ENCODE measurements at regions of chr2 and their contacts with region 1.

Region 1: GRCh38 chr2:19347619-19348562 is 10.5 kb downstream of the OSR1 start:
- DNase-seq: peak; percentile 88 to 98 (median 94)

Region 2: DNA sequence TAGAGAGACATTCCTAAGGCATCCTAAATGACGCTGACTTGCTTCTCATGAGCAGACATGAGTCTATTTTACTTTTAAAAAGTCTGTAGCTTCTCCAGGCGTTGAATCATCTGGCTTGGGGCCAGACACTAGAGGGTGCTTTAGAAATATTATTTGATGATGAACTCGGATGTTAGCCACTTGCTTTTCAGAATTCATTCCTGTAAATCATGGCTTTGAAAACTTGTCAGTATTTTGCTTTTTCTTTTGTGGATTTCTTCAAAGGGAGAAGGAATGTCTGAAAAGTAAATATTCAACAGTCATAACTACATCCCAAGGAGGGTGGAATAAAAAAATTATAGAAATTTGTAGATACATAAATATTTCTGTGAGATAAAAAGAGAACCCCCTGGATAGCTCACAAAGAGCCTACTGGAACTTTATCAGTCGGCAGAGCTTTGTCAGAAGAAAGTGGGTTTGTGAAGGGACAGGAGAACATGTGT is 360.3 kb before region 1 on chr2:
- intact Hi-C with region 1: loop called (anchors 10 kb)
- DNase-seq: peak; percentile 17 to 90 (median 70)

Region 3: GRCh38 chr2:19120941-19121750 is 226.7 kb before region 1 on chr2:
- intact Hi-C with region 1: loop called (anchors 10 kb)
- DNase-seq: peak in 35 of 42 donors; percentile 14 to 81 (median 48)

Measured in head of caudate nucleus (tissue), 42 donors.